ENCODE measurements at regions of chr3 and their contacts with region 1.

Region 1: GRCh38 chr3:16290007-16290826 is 25.2 kb downstream of the OXNAD1 start:
- DNase-seq: peak; percentile 79
- ATAC-seq: no peak
- H3K4me3 Mint-ChIP-seq: peak overlapping the region; percentile 79
- H3K27ac Mint-ChIP-seq: peak overlapping the region; percentile 94
- H3K4me1 Mint-ChIP-seq: peaks cover 94% of the 10 kb centered on the region
- H3K27me3 Mint-ChIP-seq: no peaks in the 10 kb centered on the region

Region 2: DNA sequence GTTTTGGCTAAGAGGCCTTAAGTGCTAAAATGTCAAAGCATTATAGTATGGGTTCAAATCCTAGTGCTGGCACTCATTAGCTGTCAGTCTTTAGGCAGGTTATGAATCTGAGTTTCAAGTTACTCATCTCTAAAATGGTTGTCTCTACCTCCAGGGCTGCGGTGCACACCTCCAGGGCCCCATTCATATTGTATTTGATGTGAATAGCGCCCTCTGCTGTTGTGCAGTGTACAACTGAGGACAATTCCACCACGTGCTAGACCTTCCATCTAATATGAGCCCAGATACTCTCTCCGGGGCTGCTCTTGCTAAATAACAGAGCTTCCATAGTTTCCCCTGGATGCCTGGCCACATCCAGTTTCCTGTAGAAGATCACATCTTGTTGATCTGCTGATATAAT is 29.1 kb after region 1 on chr3:
- CTCF ChIA-PET with region 1: interaction called, 262 read pairs
- POLR2A ChIA-PET with region 1: interaction called, 7 read pairs
- intact Hi-C with region 1: loop called (anchors 1 kb)
- DNase-seq: peak; percentile 94
- ATAC-seq: peak; percentile 94
- H3K4me3 Mint-ChIP-seq: peak overlapping the region; percentile 3
- H3K27ac Mint-ChIP-seq: peak overlapping the region; percentile 90
- H3K4me1 Mint-ChIP-seq: peaks cover 74% of the 10 kb centered on the region
- H3K27me3 Mint-ChIP-seq: no peaks in the 10 kb centered on the region

Region 3: GRCh38 chr3:16516695-16517481 is 226.7 kb after region 1 on chr3:
- CTCF ChIA-PET with region 1: interaction called, 7 read pairs
- POLR2A ChIA-PET with region 1: interaction called, 3 read pairs
- intact Hi-C with region 1: loop called (anchors 1 to 2 kb)
- DNase-seq: peak; percentile 62
- ATAC-seq: peak; percentile 6
- H3K4me3 Mint-ChIP-seq: peak overlapping the region; percentile 44
- H3K27ac Mint-ChIP-seq: peak overlapping the region; percentile 74
- H3K4me1 Mint-ChIP-seq: peaks cover 65% of the 10 kb centered on the region
- H3K27me3 Mint-ChIP-seq: no peaks in the 10 kb centered on the region

Region 4: DNA sequence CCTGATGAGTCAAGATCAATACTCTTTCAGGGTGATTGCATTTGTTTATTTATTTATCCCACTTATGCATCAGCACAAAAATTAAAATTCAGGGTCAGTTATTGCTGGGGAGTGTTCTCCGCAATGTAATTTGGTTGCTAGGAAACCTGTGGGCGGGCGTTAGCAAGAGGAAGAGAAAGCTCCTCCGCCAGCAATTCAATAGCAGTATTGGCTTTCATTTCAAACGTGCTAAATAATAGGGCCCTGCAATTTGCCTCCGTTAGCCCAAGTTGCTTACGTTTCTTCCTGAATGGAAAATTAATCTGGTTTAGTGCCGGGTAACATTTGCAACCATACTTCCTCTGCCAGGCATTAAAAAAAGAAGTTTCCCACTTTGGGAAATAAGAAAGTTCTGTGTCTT is 559.0 kb after region 1 on chr3:
- CTCF ChIA-PET with region 1: no interaction called
- POLR2A ChIA-PET with region 1: no interaction called
- intact Hi-C with region 1: loop called in 1 of 2 experiments (anchors 10 kb)
- DNase-seq: peak; percentile 78
- ATAC-seq: peak; percentile 69
- H3K4me3 Mint-ChIP-seq: peak overlapping the region; percentile 61
- H3K27ac Mint-ChIP-seq: peak overlapping the region; percentile 80
- H3K4me1 Mint-ChIP-seq: peaks cover 46% of the 10 kb centered on the region
- H3K27me3 Mint-ChIP-seq: no peaks in the 10 kb centered on the region

Region 5: DNA sequence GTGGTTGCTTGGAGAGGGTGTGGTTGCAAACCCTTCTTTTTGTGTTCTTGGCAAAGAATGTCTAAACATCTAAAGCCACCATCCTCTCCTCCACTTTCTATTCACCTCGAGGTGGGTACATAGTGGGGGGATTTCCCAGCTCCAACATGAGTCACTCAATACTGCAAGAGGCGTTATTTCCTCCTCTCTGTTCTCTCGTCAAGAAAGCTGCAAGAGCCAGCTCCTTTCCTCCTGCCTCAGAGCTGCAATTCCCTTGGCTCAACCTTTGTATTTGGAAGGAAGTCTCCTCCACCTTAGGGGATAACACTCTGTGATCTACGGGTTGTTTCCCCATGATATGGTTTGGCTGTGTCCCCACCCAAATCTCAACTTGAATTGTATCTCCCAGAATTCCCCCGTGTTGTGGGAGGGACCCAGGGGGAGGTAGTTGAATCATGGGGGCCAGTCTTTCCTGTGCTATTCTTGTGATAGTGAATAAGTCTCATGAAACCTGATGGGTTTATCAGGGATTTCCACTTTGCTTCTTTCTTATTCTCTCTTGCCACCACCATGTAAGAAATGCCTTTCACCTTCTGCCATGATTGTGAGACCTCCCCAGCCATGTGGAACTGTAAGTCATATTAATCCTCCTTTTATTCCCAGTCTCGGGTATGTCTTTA is 732.9 kb after region 1 on chr3:
- CTCF ChIA-PET with region 1: no interaction called
- POLR2A ChIA-PET with region 1: no interaction called
- intact Hi-C with region 1: loop called in 1 of 2 experiments (anchors 10 kb)
- DNase-seq: peak; percentile 70
- ATAC-seq: peak; percentile 94
- H3K4me3 Mint-ChIP-seq: peak overlapping the region; percentile 59
- H3K27ac Mint-ChIP-seq: peak overlapping the region; percentile 88
- H3K4me1 Mint-ChIP-seq: peaks cover 71% of the 10 kb centered on the region
- H3K27me3 Mint-ChIP-seq: no peaks in the 10 kb centered on the region